ENCODE measurements at regions of chr2 and their contacts with region 1.

Region 1: GRCh38 chr2:57850415-57851130 is 196.0 kb upstream of the VRK2 start:
- DNase-seq: no peak
- H3K4me3 ChIP-seq: no peak overlapping the region
- H3K27me3 ChIP-seq: no peaks in the 10 kb centered on the region; the same call in 1 of the 2 replicates
- CTCF ChIP-seq: no peak

Region 2: GRCh38 chr2:57881998-57882884 is 31.7 kb after region 1 on chr2:
- CTCF ChIA-PET with region 1: no interaction called
- POLR2A ChIA-PET with region 1: no interaction called
- DNase-seq: peak; percentile 38
- H3K4me3 ChIP-seq: no peak overlapping the region
- H3K27me3 ChIP-seq: no peaks in the 10 kb centered on the region
- CTCF ChIP-seq: no peak

Region 3: DNA sequence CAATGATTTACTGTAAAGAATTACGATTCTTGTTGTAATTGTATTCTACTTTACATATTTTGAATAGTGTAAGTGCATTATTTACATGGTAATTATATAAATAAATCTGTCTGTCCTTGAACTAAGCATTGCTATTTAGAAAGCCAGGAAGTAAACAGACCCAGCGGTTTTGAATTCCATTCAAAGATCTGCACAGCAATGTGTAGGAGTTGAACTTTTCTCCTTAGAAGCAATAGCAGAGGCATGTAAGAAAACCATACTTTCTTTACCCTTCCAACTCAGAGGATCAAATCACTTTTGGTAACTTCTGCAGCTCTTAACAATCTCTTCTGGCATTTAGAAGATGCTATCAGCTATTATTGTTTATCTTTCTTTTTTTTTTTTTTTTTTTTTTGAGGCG is 86.9 kb after region 1 on chr2:
- CTCF ChIA-PET with region 1: no interaction called
- POLR2A ChIA-PET with region 1: interaction called, 10 read pairs
- DNase-seq: no peak
- H3K4me3 ChIP-seq: no peak overlapping the region
- H3K27me3 ChIP-seq: no peaks in the 10 kb centered on the region
- CTCF ChIP-seq: no peak

Region 4: DNA sequence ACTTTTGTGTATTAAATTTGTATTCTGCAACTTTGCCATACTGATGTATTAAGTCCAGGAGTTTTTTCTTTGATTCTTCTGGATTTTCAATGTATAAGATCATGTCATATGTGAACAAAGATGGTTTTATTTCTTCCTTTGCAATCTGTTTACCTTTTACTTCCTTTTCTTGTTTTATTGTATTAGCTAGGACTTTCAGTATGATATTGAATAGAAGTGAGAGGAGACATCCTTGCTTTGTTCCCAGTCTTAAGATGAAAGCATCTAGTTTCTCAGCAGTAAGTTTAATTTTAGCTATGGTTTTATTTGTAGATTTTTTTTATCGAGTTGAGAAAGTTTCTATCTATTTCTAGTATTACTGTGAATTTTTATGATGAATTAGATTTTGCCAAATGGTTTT is 221.5 kb after region 1 on chr2:
- CTCF ChIA-PET with region 1: no interaction called
- POLR2A ChIA-PET with region 1: no interaction called
- DNase-seq: no peak
- H3K4me3 ChIP-seq: no peak overlapping the region
- H3K27me3 ChIP-seq: no peaks in the 10 kb centered on the region
- CTCF ChIP-seq: no peak